ENCODE measurements at regions of chr6 and their contacts with region 1.

Region 1: GRCh38 chr6:129709769-129710449 is at the start of gene ARHGAP18:
- DNase-seq: peak; percentile 94 to 95
- H3K4me3 ChIP-seq: peak within 1 kb of the TSS; percentile 68
- H3K4me3 Mint-ChIP-seq: peak within 1 kb of the TSS; percentile 84
- H3K27ac Mint-ChIP-seq: peak within 1 kb of the TSS; percentile 84
- H3K4me1 ChIP-seq: peaks cover 13% of the 10 kb centered on the region
- H3K4me1 Mint-ChIP-seq: peaks cover 29% of the 10 kb centered on the region
- H3K27me3 ChIP-seq: no peaks in the 10 kb centered on the region
- H3K27me3 Mint-ChIP-seq: no peaks in the 10 kb centered on the region
- CTCF ChIP-seq: no peak
- total RNA-seq, gene ARHGAP18: 15.0 and 15.6 TPM in 2 replicates

Region 2: DNA sequence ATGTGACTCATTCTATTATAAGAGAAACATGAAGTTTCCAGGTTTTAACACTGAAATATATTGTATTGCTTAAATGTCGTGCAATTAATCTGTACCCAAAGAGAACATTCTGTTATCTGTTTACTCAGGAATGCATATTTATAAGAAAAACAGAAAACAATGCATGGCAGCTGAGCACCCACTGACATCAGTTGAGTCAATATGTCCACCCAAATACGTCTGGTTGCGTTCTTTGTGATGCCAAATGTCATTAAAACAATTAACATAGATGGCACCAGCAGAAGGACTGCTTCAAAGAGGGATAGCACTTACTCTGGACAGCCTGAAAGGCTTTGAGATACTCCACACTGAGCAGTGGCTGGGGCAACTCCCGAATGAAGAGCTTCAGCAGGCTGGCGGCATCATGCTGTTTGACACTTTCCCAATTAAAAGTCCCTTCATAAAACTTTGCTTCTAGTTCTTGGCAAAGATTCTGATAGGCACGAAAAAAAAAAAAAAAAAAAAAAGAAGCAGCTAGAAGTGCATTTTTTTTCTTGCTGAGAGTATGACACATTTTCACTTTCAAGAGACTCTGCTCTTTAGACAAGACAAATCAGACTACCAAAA is 102.2 kb before region 1 on chr6:
- CTCF ChIA-PET with region 1: interaction called, 8 read pairs
- POLR2A ChIA-PET with region 1: no interaction called
- intact Hi-C with region 1: loop called (anchors 5 kb)
- DNase-seq: no peak
- H3K4me3 ChIP-seq: no peak overlapping the region
- H3K4me3 Mint-ChIP-seq: no peak overlapping the region
- H3K27ac Mint-ChIP-seq: no peak overlapping the region
- H3K4me1 ChIP-seq: peaks cover 9% of the 10 kb centered on the region
- H3K4me1 Mint-ChIP-seq: peaks cover 14% of the 10 kb centered on the region
- H3K27me3 ChIP-seq: no peaks in the 10 kb centered on the region
- H3K27me3 Mint-ChIP-seq: no peaks in the 10 kb centered on the region
- CTCF ChIP-seq: no peak

Region 3: DNA sequence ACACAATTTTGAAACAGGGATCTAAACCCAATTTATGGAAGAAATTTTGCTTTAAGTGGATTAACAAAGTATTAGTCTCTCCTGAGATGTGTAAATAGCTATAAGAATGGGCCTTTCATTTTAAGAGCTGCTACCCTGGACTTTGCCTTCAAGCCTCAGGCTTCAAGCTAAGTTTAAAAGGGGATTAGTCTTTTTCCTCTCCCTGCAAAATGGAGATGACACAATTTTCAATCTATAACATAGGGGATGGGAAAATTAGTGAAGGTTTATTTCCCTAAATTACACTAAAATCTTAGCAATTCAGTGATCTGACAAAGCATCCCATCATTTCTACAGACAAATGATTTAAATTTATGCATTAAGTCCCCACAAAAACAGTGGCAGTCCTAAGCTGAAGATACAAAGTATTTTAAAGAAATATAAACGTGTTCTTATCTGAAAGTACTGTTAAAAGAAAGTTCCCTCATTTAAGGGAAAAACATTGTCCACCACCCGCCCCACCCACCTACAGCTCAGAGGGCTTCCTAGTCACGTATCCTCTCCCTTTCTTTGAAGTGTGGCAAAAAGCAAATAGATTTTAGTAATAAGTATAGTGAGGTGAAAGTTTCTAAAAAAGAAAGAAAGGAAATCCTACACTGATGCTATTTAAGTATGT is 14.4 kb before region 1 on chr6:
- CTCF ChIA-PET with region 1: interaction called, 3 read pairs
- POLR2A ChIA-PET with region 1: interaction called, 5 read pairs
- intact Hi-C with region 1: loop called (anchors 1 kb)
- DNase-seq: no peak
- H3K4me3 ChIP-seq: no peak overlapping the region
- H3K4me3 Mint-ChIP-seq: no peak overlapping the region
- H3K27ac Mint-ChIP-seq: no peak overlapping the region
- H3K4me1 ChIP-seq: peaks cover 58% of the 10 kb centered on the region
- H3K4me1 Mint-ChIP-seq: peaks cover 26% of the 10 kb centered on the region
- H3K27me3 ChIP-seq: no peaks in the 10 kb centered on the region
- H3K27me3 Mint-ChIP-seq: no peaks in the 10 kb centered on the region
- CTCF ChIP-seq: no peak